ENCODE measurements at regions of chr5 and their contacts with region 1.

Region 1: DNA sequence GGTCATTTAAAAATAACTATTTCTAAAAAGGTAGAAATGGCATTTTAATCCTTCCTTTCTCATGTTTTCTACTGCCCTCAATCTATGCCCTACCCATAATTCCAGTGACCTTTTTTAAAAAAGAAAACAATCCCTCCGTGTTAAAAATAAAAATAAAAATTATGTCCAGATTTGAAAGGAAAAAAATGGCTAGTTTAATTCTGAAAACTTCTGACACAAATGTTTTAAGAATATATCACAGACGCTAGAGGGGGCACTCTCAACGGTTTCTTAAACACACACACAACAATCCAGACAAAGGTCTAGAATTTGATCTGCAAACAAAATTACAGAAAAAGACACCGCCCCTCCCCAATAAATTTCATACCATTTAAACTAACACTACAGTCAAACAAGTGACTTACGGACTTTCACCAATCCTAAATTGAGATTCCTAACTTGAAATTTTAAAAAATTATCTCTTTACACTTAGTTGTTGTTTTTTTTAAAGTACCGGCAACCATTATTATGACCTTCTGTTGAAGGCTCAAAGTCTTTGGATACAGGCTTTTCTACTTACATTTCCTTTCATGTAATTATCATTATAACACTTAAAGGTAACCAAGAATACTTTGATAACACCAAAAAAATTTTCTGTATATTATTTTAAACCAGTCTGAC is 38.2 kb downstream of the CLINT1 start:
- DNase-seq: peak in 1 of 2 donors; percentile 64
- ATAC-seq: no peak
- H3K4me3 ChIP-seq: no peak overlapping the region
- H3K4me3 Mint-ChIP-seq: no peak overlapping the region
- H3K27ac ChIP-seq: no peak overlapping the region
- H3K27ac Mint-ChIP-seq: peak overlapping the region; percentile 65 to 79
- H3K4me1 ChIP-seq: no peaks in the 10 kb centered on the region
- H3K4me1 Mint-ChIP-seq: peaks cover 38 to 54% of the 10 kb centered on the region in 2 donors
- H3K27me3 ChIP-seq: no peaks in the 10 kb centered on the region
- H3K27me3 Mint-ChIP-seq: no peaks in the 10 kb centered on the region
- CTCF ChIP-seq: peak; percentile 57

Region 2: DNA sequence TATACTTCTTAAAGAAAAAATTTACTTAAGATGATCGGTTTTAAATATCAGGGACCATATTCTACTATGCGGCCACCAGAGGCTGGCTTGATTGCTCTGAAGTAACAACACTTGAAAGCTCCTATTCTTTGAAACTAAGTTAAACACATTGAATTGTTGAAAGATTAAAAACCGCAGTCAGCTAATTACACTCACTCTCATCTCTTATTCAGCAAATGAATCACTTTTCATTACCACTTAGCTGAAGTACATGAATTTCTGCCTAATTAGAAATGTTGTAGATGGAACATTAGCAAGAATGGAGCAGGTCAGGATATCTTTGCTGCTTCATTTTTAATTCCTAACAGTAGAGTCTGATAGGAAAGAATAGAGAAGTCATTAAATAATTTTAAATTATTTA is 34.9 kb before region 1 on chr5:
- intact Hi-C with region 1: no loop called
- DNase-seq: no peak
- ATAC-seq: no peak
- H3K4me3 ChIP-seq: no peak overlapping the region
- H3K4me3 Mint-ChIP-seq: no peak overlapping the region
- H3K27ac ChIP-seq: no peak overlapping the region
- H3K27ac Mint-ChIP-seq: no peak overlapping the region
- H3K4me1 ChIP-seq: no peaks in the 10 kb centered on the region
- H3K4me1 Mint-ChIP-seq: no peaks in the 10 kb centered on the region
- H3K27me3 ChIP-seq: no peaks in the 10 kb centered on the region
- H3K27me3 Mint-ChIP-seq: no peaks in the 10 kb centered on the region
- CTCF ChIP-seq: no peak

Region 3: DNA sequence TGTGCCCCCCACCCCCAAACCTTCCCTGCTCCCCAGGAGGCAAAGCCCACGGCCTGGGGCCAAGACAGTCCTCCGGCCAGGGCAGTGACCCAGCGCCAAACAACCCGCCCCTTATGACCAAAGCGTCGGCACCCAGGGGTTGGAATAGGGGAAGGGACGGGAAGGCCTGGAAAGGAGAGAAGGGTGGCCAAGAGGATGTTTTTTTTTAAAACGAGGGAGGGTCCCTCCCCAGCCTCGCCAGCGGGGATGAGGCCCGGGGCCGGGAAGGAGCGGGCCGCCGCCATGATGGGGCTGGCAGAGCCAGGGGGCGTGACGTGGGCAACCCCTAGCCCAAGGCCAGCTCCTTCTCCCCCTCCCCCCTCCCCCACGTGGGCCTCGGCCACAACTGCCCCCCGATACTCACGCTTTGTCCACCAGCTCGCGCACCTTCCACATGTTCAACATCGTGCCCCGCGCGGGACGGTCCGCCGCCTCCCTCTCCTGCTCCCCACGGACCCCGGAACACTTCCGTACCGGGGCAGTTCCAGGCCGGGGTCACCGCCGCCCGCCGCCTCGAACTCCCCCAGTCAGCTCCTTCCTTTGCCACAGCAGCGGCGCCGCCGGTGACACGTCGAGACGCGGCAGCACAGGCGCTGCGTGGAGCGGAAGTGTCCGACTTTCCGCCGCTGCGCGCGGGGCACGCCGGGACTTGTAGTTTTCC is 38.0 kb after region 1 on chr5 and contains the start of gene CLINT1:
- intact Hi-C with region 1: loop called (anchors 5 kb)
- DNase-seq: peak; percentile 82 to 94
- ATAC-seq: peak; percentile 87 to 91 (median 91)
- H3K4me3 ChIP-seq: peak within 1 kb of the TSS; percentile 96
- H3K4me3 Mint-ChIP-seq: peak within 1 kb of the TSS; percentile 98
- H3K27ac ChIP-seq: peak within 1 kb of the TSS; percentile 93
- H3K27ac Mint-ChIP-seq: peak within 1 kb of the TSS; percentile 98 to 99
- H3K4me1 ChIP-seq: peaks cover 10% of the 10 kb centered on the region
- H3K4me1 Mint-ChIP-seq: peaks cover 50 to 55% of the 10 kb centered on the region in 2 donors
- H3K27me3 ChIP-seq: no peaks in the 10 kb centered on the region
- H3K27me3 Mint-ChIP-seq: peaks cover 0 to 3% of the 10 kb centered on the region in 2 donors
- CTCF ChIP-seq: no peak
- total RNA-seq, gene CLINT1: 111 to 156 (median 132) TPM

Region 4: DNA sequence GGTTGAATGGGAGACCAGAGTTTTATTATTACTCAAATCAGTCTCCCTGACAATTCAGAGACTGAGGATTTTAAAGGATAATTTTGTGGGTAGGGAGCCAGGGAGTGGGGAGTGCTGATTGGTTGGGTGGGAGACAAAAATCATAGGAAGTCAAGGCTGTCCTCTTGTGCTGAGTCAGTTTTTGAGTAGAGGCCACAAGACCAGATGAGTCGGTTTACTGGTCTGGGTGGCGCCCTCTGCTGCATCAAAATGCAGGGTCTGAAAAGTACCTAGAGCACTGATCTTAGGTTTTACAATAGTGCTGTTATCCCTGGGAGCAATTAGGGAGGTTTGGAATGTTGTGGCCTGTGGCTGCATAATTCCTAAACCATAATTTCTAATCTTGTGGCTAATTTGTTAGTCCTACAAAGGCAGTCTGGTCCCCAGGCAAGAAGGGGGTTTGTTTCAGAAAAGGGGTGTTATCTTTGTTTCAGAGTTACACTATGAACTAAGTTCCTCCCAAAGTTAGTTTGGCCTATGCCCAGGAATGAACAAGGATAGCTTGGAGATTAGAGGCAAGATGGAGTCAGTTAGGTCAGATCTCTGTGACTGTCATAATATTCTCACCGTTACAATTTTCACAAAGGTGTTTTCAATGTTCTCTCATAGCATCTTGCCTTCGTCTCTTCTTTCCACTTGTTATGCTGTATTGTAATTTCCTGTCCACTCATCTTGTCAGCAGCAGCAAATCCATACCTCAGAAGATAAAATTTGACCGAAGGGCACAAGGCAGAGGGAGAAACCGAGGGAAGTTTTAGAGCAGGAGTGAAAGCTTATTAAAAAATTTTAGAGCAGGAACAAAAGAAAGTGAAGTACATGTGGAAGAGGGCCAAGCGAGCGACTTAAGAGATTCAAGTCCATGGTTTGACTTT is 97.4 kb after region 1 on chr5:
- intact Hi-C with region 1: loop called (anchors 1 kb)
- DNase-seq: peak; percentile 50 to 69
- ATAC-seq: peak; percentile 70 to 85 (median 82)
- H3K4me3 ChIP-seq: no peak overlapping the region
- H3K4me3 Mint-ChIP-seq: no peak overlapping the region
- H3K27ac ChIP-seq: no peak overlapping the region
- H3K27ac Mint-ChIP-seq: no peak overlapping the region
- H3K4me1 ChIP-seq: peaks cover 8% of the 10 kb centered on the region
- H3K4me1 Mint-ChIP-seq: peaks cover 18 to 21% of the 10 kb centered on the region in 2 donors
- H3K27me3 ChIP-seq: no peaks in the 10 kb centered on the region
- H3K27me3 Mint-ChIP-seq: peaks cover 10 to 22% of the 10 kb centered on the region in 2 donors
- CTCF ChIP-seq: peak; percentile 64

Region 5: DNA sequence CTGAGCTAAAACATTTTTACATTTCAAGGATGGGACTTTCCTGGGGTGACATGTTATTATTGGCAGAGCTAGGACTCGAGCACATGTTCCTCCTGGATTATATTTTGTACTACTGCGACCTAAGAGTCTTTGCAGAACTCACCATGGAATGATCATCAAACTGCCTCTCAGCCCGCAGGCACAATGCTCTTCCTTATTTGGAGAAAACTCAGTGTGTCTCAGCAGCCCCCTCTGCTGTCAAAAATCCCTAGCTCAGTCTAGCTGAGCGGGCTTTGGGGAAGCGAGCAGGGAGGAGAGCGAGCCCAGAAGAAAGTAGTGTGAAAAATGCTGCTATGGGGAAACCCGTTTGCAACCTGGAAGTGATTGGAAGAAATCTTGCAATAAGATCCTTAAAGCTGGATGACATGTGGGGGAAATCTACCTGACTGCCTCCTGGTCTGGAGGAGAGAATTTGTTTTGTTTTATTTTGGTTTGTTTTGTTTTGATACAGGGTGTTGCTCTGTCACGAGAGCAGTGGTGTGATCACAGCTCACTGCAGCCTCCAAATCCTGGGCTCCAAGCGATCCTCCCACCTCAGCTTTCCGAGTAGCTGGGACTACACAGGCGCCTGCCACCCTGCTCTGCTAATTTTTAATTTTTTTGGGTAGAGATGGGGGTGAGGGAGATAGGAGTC is 128.2 kb after region 1 on chr5:
- intact Hi-C with region 1: loop called (anchors 1 kb)
- DNase-seq: peak; percentile 53 to 87
- ATAC-seq: peak; percentile 92 to 99 (median 95)
- H3K4me3 ChIP-seq: no peak overlapping the region
- H3K4me3 Mint-ChIP-seq: no peak overlapping the region
- H3K27ac ChIP-seq: no peak overlapping the region
- H3K27ac Mint-ChIP-seq: no peak overlapping the region
- H3K4me1 ChIP-seq: no peaks in the 10 kb centered on the region
- H3K4me1 Mint-ChIP-seq: peaks cover 6 to 7% of the 10 kb centered on the region in 2 donors
- H3K27me3 ChIP-seq: no peaks in the 10 kb centered on the region
- H3K27me3 Mint-ChIP-seq: peaks cover 13 to 23% of the 10 kb centered on the region in 2 donors
- CTCF ChIP-seq: peak; percentile 68

Region 6: GRCh38 chr5:157994906-157995519 is 174.3 kb after region 1 on chr5:
- intact Hi-C with region 1: loop called (anchors 1 kb)
- DNase-seq: peak in 1 of 2 donors; percentile 68
- ATAC-seq: peak; percentile 69 to 87 (median 77)
- H3K4me3 ChIP-seq: no peak overlapping the region
- H3K4me3 Mint-ChIP-seq: peak overlapping the region; percentile 40
- H3K27ac ChIP-seq: no peak overlapping the region
- H3K27ac Mint-ChIP-seq: no peak overlapping the region
- H3K4me1 ChIP-seq: peaks cover 19% of the 10 kb centered on the region
- H3K4me1 Mint-ChIP-seq: peaks cover 12 to 13% of the 10 kb centered on the region in 2 donors
- H3K27me3 ChIP-seq: peaks cover 22% of the 10 kb centered on the region
- H3K27me3 Mint-ChIP-seq: peaks cover 35 to 61% of the 10 kb centered on the region in 2 donors
- CTCF ChIP-seq: peak; percentile 58

Region 7: GRCh38 chr5:159112436-159112835 is 1291.7 kb after region 1 on chr5:
- intact Hi-C with region 1: loop called (anchors 10 kb)
- DNase-seq: no peak
- ATAC-seq: no peak
- H3K4me3 ChIP-seq: no peak overlapping the region
- H3K4me3 Mint-ChIP-seq: no peak overlapping the region
- H3K27ac ChIP-seq: no peak overlapping the region
- H3K27ac Mint-ChIP-seq: no peak overlapping the region
- H3K4me1 ChIP-seq: no peaks in the 10 kb centered on the region
- H3K4me1 Mint-ChIP-seq: no peaks in the 10 kb centered on the region
- H3K27me3 ChIP-seq: peaks cover 17% of the 10 kb centered on the region
- H3K27me3 Mint-ChIP-seq: peaks cover 20 to 59% of the 10 kb centered on the region in 2 donors
- CTCF ChIP-seq: no peak